ENCODE measurements at regions of chr4 and their contacts with region 1.

Region 1: DNA sequence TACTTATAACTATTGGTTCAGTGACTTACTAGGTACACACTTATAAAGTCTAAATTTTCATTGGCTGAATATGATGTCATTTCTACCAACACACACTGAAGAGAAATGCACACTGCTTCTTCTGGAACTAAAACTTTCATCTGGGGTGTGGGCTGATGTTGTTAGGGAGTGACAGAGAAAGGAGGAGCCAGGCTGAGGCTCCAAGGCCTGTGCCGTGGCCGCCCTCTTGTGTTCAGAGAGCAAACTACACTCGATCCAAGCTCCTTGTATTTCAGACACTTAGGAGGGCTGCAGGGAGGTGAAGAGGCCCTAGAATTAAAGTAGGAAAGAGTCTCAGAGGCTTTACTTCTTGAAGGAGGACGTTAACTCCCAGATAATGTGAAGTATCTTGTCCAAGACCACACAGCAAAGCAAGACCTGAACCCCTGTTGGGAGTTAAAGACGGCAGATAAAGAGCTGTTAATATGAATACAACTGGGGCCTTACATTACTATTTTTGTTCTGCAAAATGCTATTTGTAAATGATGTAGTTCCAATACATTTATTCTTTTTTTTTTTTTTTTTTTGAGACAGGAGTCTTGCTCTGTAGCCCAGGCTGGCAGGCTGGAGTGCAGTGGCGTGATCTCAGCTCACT is 137.5 kb downstream of the AFAP1 start:
- DNase-seq: peak; percentile 74 to 86 (median 81)
- H3K4me3 ChIP-seq: no peak overlapping the region
- H3K27ac ChIP-seq: no peak overlapping the region
- H3K4me1 ChIP-seq: no peaks in the 10 kb centered on the region
- H3K27me3 ChIP-seq: peaks cover 0 to 46% (median 14%) of the 10 kb centered on the region in 5 experiments

Region 2: DNA sequence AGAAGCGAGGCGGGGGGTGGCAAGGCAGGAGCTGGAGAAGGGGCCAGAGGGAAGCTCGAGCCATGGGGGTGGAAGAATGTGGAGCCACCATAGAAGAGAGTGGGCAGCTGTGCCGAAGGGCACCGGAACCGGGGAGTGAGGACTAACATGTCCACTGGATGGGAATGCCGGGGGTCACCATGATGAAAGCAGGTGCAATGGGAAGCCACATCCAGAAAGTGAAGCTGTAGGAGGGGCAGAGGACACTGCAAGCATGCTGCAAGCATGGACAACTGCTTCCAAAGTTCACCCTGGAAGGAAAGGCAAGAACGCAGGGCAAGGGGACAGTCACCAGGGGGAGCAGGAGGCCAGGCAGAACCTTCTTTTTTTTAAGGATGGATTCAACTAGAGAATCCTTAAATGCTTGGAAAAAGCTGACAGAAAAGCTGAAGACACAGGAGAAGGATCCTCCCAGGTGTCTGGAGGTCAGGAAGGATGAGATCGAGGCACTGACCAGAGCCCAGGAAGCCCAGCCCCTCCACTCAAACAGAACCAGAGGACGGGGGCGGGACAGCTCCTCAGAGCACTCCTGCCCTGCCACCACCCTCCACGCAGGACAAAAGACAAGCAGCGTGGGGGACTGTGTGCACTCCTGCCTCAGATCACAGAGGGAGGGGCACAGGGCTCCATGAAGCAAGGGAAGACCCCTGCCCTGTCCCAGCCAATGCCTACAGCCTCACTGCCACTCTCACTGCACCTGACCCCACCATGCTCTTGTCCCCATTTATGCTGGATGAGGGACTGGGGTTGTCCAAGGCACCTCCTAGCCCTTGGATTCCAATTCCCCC is 31.8 kb before region 1 on chr4:
- CTCF ChIA-PET with region 1: interaction called, 26 read pairs
- POLR2A ChIA-PET with region 1: no interaction called
- DNase-seq: peak; percentile 18 to 40 (median 28)
- H3K4me3 ChIP-seq: no peak overlapping the region
- H3K27ac ChIP-seq: no peak overlapping the region
- H3K4me1 ChIP-seq: peaks cover 0 to 6% (median 0%) of the 10 kb centered on the region in 4 experiments
- H3K27me3 ChIP-seq: peaks cover 0 to 64% (median 4%) of the 10 kb centered on the region in 5 experiments

Region 3: GRCh38 chr4:7815562-7815961 is 13.4 kb after region 1 on chr4:
- CTCF ChIA-PET with region 1: interaction called, 16 read pairs
- POLR2A ChIA-PET with region 1: no interaction called
- DNase-seq: no peak
- H3K4me3 ChIP-seq: no peak overlapping the region
- H3K27ac ChIP-seq: no peak overlapping the region
- H3K4me1 ChIP-seq: no peaks in the 10 kb centered on the region
- H3K27me3 ChIP-seq: peaks cover 0 to 56% (median 5%) of the 10 kb centered on the region in 5 experiments

Region 4: DNA sequence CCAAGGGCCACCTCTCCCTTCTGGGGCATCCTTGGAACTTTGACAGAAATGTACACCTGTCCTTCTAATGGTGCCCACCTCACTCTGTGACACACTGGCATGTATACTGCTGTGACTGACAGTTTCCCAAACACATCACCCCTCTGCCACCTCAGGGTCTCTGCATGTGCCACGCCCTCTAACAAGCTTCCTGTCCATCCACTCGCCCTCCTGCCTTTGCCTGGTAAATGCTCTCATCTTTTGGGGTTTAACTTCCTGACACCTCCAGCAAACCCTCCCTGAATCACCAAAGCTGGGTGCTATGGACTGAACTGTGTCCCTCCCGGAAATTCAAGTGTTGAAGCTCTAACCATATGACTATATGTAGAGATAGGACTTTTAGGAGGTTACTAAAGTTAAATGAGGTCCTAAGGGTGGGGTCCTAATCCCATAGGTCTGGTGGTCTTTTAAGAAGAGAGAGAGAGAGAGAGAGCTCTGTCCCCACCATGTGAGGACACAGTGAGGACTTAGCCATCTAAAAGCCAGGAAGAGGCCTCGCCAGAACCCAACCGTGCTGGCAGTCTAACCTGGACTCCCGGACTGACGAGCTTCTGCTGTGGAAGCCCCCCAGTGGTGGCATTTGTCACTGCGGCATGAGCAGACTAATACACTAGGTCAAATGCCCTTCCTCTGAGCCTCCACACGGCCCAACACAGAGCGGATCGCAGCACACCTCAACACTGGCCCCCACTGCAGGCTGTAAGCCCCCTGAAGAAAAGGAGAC is 41.8 kb after region 1 on chr4:
- CTCF ChIA-PET with region 1: interaction called, 157 read pairs
- POLR2A ChIA-PET with region 1: no interaction called
- DNase-seq: peak; percentile 60 to 73 (median 64)
- H3K4me3 ChIP-seq: no peak overlapping the region
- H3K27ac ChIP-seq: no peak overlapping the region
- H3K4me1 ChIP-seq: no peaks in the 10 kb centered on the region
- H3K27me3 ChIP-seq: peaks cover 0 to 46% (median 3%) of the 10 kb centered on the region in 5 experiments

Region 5: DNA sequence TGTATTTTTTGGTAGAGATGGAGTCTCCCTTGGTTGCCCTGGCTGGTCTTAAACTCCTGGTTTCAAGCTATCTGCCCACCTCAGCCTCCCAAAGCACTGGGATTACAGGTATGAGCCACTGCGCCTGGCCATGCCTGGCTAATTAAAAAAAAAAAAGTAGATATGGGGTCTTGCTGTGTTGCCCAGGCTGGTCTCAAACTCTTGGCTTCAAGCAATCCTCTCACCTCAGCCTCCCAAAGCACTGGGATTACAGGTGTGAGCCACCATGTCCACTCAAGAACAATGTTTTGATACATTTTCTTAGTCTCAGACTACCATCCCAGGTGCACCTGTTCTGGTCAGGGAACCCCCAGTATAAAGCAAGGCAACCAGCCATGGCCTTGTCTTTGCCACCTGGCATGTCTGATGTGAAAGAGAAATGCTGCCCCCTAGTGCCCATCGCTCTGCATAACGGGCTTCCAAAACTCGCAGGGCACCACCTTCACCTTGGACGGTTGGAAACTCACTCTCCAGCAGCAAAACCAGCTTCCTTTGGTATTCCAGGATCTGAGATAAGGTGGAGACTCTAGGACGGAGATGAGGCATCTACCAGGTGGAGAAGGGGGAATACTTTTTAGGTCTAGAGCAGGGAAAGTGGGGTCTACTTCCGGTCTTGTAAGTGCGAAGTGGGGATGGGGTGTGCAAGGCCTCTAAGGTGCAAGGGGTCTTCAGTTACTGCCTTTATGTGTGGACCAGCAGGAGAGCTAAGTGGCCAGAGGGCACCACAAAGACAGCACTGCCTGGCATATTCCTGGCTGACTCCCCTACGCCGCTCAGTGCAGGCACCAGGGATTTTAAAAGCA is 185.2 kb after region 1 on chr4:
- CTCF ChIA-PET with region 1: interaction called, 73 read pairs
- POLR2A ChIA-PET with region 1: no interaction called
- DNase-seq: peak; percentile 62 to 79 (median 69)
- H3K4me3 ChIP-seq: no peak overlapping the region
- H3K27ac ChIP-seq: no peak overlapping the region
- H3K4me1 ChIP-seq: peaks cover 0 to 1% (median 0%) of the 10 kb centered on the region in 4 experiments
- H3K27me3 ChIP-seq: peaks cover 0 to 49% (median 8%) of the 10 kb centered on the region in 5 experiments

Measured in common myeloid progenitor, CD34-positive (primary cell).